GM12878 (cell line): ENCODE measurements at regions of chr21 and their contacts with region 1.

Region 1: DNA sequence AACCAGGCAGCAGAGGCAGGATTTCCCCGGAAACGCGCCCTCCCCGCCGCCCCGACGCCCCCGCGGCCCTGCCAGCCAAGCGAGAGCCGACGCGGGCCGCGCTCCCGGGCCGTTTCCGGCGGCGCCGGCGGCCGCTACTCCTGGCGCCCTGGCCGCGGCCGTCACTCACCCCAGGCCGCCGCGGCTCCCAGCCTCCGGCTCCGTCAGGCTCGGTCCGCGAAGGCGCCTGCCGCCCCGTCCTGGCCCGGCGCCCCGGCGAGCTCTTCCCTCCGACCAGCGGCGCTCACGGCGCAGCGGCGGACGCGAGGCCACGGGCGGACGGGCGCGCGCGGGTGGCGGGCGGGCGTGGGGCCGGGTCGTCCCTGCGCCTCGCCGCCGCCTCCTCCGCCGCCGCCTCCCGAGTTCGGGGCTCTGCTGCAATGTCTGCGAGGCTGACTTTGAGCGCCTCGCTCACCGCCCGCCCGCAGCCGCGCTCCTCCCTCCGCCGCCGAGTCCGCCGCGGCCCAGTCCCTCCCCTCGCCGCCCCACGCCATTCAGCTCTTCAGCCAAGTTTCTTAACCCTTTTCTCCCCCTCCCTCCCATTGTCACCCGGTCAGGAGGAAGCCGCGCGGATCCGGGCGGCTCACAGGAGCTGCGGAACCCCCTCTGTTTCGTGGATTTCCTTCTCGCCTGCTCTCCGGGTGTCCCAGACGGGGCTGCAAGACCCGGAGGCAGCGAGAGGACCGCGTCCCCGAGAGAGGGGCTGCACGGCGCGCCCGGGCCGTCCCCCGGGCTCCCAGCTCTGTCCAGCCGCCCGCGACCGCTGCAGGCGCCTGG is at the start of gene NRIP1:
- DNase-seq: no peak
- ATAC-seq: peak; percentile 84
- H3K4me3 ChIP-seq: peak within 1 kb of the TSS; percentile 91
- H3K27ac ChIP-seq: peak within 1 kb of the TSS; percentile 63
- H3K4me1 ChIP-seq: no peaks in the 10 kb centered on the region
- H3K27me3 ChIP-seq: peaks cover 0 to 5% of the 10 kb centered on the region in 2 experiments; a peak in 1 of 4 replicates
- CTCF ChIP-seq: no peak
- EP300 ChIP-seq: no peak
- POLR2A ChIP-seq: peak; percentile 80
- RAD21 ChIP-seq: no peak
- polyA plus RNA-seq, gene NRIP1: 2.9 to 4.0 TPM

Region 2: DNA sequence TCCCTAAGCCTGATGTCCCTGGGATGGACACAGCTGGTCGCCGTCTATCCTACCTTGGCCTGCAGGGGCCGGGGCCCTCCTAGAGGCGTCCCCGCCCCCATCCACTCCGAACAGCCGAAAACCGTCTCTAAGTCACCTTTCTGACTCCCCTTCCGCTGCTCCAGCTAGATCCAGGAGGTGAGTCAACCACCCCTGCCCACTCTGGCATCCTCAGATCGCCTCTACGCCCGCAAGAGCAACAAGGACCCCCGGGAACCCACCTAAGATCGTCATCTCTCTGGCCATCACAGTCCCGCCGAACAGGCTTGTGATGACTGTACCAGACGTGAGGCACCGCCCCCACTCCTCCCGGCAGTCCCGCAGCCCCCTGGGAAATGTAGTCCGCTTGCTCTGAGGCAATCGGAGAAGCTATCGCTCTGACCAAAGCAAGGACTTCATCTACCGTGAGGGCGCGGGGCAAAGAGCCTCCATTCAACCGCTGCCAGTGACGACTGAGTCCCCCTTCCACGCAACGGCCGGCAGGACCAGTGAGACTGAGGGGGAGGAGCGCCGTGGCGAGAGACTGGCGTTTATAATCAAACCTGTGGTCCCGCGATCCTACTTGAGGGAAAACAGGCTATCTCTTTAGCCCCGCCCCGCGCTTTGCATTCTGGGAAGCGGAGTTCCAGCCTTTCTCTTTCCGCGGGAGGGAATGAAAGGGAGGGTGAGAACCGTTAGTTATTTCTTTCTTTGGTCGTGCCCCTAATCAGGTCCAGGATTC is 681.8 kb before region 1 on chr21 and contains the start of gene HSPA13:
- CTCF ChIA-PET with region 1: no interaction called
- POLR2A ChIA-PET with region 1: no interaction called
- RAD21 ChIA-PET with region 1: no interaction called
- SMC1A ChIA-PET with region 1: no interaction called
- in situ Hi-C with region 1: no loop called
- intact Hi-C with region 1: loop called (anchors 5 kb)
- DNase-seq: peak; percentile 99
- ATAC-seq: peak; percentile 97
- H3K4me3 ChIP-seq: peak within 1 kb of the TSS; percentile 95
- H3K27ac ChIP-seq: peak within 1 kb of the TSS; percentile 91
- H3K4me1 ChIP-seq: 0 out of 2 replicates have a peak, but pooled peaks cover 6% of the 10 kb centered on the region
- H3K27me3 ChIP-seq: no peaks in the 10 kb centered on the region
- CTCF ChIP-seq: 0 out of 6 replicates have a peak, but pooled peaks of 1 of the 3 experiments have one; percentile 7
- EP300 ChIP-seq: no peak
- POLR2A ChIP-seq: peak; percentile 84
- RAD21 ChIP-seq: no peak
- polyA plus RNA-seq, gene HSPA13: 10.0 to 17.7 TPM

Region 3: DNA sequence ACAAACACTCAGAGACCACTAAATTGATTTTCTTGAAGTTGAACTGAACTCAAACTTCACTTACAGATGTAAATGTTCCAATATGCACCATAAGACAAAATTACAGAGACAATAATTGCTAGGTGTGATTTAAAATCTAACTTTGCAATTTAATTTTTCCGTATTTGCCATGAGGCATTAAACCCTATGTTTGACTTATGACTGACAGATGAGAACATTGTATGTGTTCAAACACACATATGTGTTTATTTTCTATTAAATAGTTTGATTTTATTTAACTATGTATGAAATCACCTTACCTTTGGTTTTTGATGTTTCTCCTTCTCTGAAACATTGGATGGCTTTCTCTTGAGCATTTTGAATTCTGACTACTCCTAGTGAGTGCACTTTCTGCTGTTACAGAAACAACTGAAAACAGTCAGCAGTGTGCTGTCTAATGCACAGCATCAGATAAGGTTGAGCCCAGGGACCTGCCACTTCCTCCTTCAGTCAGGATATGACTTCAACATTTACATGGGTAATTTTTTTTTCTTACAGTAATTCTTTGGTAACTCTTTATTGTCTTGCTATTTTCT is 518.8 kb before region 1 on chr21 and contains the start of gene SAMSN1:
- CTCF ChIA-PET with region 1: no interaction called
- POLR2A ChIA-PET with region 1: no interaction called
- RAD21 ChIA-PET with region 1: no interaction called
- SMC1A ChIA-PET with region 1: no interaction called
- in situ Hi-C with region 1: no loop called
- intact Hi-C with region 1: loop called (anchors 10 kb)
- DNase-seq: peak; percentile 78
- ATAC-seq: peak; percentile 86
- H3K4me3 ChIP-seq: peak within 1 kb of the TSS; percentile 76
- H3K27ac ChIP-seq: peak within 1 kb of the TSS; percentile 87
- H3K4me1 ChIP-seq: peaks cover 12% of the 10 kb centered on the region; the same call in 1 of the 2 replicates
- H3K27me3 ChIP-seq: no peaks in the 10 kb centered on the region
- CTCF ChIP-seq: no peak
- EP300 ChIP-seq: peak in 1 of 2 experiments; percentile 66; a peak in 1 of 4 replicates
- POLR2A ChIP-seq: peak; percentile 83
- RAD21 ChIP-seq: 0 out of 2 replicates have a peak, but pooled peaks have one; percentile 22
- polyA plus RNA-seq, gene SAMSN1: 90.4 to 102 TPM

Region 4: DNA sequence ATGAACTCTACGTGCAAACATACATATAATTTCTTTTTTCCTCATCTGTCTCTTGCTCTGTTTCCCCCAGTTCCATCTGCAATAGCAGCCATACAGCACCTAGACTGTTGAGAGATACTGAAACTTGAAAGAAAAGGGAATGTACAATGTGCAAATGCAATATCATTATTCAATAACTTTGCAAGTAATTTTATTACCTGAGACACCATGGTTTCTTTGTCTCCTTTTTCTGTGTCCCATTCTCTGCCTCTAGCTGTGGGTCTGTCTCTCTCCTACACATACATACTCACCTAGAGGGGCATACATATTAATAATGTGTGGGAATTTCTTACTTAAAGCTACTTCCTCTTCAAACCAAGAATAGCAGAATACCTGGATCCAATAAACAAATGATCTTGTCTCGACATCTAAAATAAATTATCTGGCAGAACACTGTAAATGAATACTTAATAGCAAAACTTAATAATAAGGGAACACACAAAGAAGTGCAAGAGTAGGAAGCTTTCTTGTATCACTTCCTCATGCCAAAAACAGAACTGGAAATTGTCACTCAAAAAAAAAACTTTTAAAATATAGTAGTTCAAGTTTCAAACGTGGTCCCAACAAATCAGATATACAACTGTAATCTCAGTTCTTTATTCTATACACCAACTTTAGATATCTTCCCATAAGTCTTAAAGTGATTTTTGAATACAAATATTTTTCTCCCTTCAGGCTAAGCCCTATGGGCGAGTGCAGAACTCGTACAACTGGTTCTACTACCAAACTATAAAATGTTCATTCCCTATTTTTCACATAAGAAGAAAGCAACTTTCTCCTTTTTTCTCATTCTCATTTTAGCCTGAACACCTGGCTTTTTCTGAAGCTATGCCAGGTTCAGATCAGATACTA is 194.6 kb before region 1 on chr21:
- CTCF ChIA-PET with region 1: interaction called, 13 read pairs
- POLR2A ChIA-PET with region 1: interaction called, 3 read pairs
- RAD21 ChIA-PET with region 1: interaction called, 3 read pairs
- SMC1A ChIA-PET with region 1: interaction called, 10 read pairs
- in situ Hi-C with region 1: no loop called
- intact Hi-C with region 1: loop called (anchors 2 kb)
- DNase-seq: no peak
- ATAC-seq: peak; percentile 73
- H3K4me3 ChIP-seq: peak overlapping the region; percentile 12; the same call in 1 of the 2 replicates
- H3K27ac ChIP-seq: 0 out of 2 replicates have a peak overlapping the region, but pooled peaks have one; percentile 4
- H3K4me1 ChIP-seq: peaks cover 24% of the 10 kb centered on the region
- H3K27me3 ChIP-seq: no peaks in the 10 kb centered on the region
- CTCF ChIP-seq: no peak
- EP300 ChIP-seq: peak in 1 of 2 experiments; percentile 6; a peak in 1 of 4 replicates
- POLR2A ChIP-seq: no peak
- RAD21 ChIP-seq: no peak

Region 5: DNA sequence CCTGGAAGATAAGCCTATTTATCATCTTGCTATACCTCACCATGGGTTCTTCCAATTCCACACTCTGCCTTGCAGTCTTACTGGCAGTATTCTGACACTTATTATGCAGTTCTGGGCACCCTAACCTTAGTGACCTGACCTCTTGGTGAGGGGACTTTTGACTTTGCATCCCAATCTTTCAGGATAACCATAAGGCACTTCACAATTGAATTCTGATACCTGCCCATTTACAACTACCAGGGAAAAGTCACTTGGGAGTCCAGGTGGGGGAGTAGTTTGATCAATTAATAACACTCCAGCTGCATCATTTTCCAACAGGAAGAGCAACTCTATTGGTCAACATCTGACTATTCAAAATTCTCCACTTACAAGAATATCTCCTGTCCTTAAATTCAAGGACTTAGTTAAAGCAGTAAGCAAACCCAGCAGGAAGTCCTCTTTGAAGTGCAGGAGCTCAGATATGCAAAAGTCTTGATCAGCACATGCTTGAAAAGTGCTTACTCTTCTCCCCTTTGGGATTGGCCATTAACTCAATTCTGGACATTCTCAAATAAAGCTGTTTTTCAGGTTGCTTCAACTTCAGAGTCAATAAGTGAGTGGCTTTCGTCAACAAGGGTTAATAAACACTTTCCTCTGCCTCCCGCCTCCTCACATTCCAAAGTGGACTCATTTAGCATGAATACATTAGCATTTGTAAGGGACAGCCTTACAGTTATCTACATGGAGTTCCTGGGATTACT is 177.4 kb after region 1 on chr21:
- CTCF ChIA-PET with region 1: no interaction called
- POLR2A ChIA-PET with region 1: no interaction called
- RAD21 ChIA-PET with region 1: no interaction called
- SMC1A ChIA-PET with region 1: no interaction called
- in situ Hi-C with region 1: no loop called
- intact Hi-C with region 1: no loop called
- DNase-seq: no peak
- ATAC-seq: no peak
- H3K4me3 ChIP-seq: no peak overlapping the region
- H3K27ac ChIP-seq: no peak overlapping the region
- H3K4me1 ChIP-seq: no peaks in the 10 kb centered on the region
- H3K27me3 ChIP-seq: no peaks in the 10 kb centered on the region
- CTCF ChIP-seq: no peak
- EP300 ChIP-seq: no peak
- POLR2A ChIP-seq: no peak
- RAD21 ChIP-seq: 0 out of 2 replicates have a peak, but pooled peaks have one; percentile 2

Region 6: GRCh38 chr21:15437883-15438282 is 373.1 kb after region 1 on chr21:
- CTCF ChIA-PET with region 1: no interaction called
- POLR2A ChIA-PET with region 1: no interaction called
- RAD21 ChIA-PET with region 1: no interaction called
- SMC1A ChIA-PET with region 1: interaction called, 3 read pairs
- in situ Hi-C with region 1: no loop called
- intact Hi-C with region 1: loop called (anchors 10 kb)
- DNase-seq: peak; percentile 46
- ATAC-seq: peak; percentile 89
- H3K4me3 ChIP-seq: no peak overlapping the region
- H3K27ac ChIP-seq: no peak overlapping the region
- H3K4me1 ChIP-seq: no peaks in the 10 kb centered on the region
- H3K27me3 ChIP-seq: no peaks in the 10 kb centered on the region
- CTCF ChIP-seq: no peak
- EP300 ChIP-seq: peak; percentile 67 to 72; a peak in 3 of 4 replicates
- POLR2A ChIP-seq: no peak
- RAD21 ChIP-seq: no peak